Dorsolateral prefrontal cortex (tissue), 120 donors: ENCODE measurements at regions of chr2 and their contacts with region 1.

Region 1: GRCh38 chr2:203909261-203909967 is 27.1 kb upstream of the ICOS start:
- DNase-seq: peak in 1 of 10 donors; percentile 39
- H3K4me3 ChIP-seq: peak overlapping the region in 57 of 59 donors; percentile 2 to 61 (median 41)
- H3K27ac ChIP-seq: peak overlapping the region in 30 of 59 donors; percentile 2 to 75 (median 37)
- H3K27me3 ChIP-seq: peaks cover 0 to 5% (median 0%) of the 10 kb centered on the region in 45 donors
- CTCF ChIP-seq: peak; percentile 58 to 94 (median 83)

Region 2: DNA sequence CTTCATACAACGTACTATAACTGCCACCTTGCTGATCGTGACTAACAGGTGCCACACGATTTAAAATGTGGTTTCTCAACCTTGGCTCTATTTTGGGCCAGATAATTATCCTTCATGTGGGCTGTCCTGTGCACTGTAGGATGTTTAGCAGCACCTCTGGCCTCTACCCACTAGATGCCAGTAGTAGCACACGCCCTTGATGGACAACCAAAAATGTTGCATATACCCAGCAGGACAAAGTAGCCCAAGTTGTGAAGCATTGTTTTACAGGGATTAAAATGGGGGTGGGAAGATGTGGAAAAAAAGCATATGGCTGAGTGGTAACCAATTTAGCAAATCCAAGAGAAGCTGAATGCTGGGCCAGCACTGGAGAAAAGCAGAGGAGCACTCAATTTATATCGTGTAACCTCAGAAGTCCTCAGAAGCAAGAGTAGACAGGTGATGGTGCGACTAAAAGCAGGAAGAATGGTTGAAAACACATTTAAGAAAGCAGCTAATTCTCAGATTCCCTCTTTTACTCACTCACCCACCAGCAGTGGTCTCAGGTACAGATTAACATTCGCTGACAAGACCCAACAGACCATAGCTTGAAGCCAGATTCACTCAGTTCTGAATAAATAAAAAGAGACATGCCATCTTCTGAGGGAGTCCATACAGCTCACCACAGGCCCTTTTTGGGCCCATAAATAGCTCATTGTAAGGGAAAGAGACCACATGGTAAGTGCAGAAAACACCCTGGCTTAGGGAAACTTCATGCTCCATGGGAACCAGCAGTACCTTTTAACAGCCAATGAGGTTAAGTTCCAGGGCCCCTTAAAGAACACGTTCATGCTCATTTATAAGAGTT is 424.9 kb before region 1 on chr2:
- intact Hi-C with region 1: loop called (anchors 5 to 10 kb)
- DNase-seq: peak in 1 of 10 donors; percentile 24
- H3K4me3 ChIP-seq: no peak overlapping the region
- H3K27ac ChIP-seq: no peak overlapping the region
- H3K27me3 ChIP-seq: no peaks in the 10 kb centered on the region
- CTCF ChIP-seq: peak in 54 of 56 donors; percentile 28 to 78 (median 62)

Region 3: DNA sequence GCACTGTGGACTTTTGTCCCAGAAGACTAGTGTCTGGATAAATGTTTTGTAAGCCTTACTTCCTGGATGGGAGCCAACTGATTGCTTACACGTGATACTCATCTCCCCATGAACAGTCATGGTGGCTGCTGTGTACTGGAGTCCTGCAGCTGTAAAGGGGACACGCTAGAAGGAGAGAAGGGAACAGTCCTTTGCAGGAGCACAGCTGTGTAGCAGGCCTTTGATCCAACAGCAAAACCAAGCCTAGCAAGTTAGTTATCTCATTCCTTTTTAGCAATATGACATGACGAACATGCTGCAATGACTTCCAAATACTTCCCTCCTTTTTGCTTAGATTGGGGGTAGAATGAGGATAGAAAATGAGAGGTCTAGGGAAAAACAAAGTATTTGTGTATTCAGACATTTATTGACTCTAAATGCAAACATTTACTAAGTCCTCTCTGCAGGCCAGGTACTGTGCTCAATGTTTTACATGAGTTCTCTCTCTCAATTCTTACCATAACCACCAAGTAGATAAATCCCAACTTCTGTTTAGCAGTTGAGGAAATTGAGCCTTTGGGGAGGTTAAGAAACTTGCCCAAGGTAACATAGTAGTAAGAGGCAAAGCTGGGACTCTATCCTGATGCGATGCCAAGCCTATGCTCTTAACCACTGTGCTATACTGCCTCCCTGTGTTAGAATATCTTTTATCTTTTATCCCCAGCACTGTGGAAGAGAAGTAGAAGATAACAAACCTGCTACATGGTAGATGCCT is 258.4 kb before region 1 on chr2:
- intact Hi-C with region 1: loop called (anchors 5 kb)
- DNase-seq: peak in 1 of 10 donors; percentile 37
- H3K4me3 ChIP-seq: peak overlapping the region in 1 of 59 donors; percentile 20
- H3K27ac ChIP-seq: peak overlapping the region in 43 of 59 donors; percentile 0 to 75 (median 57)
- H3K27me3 ChIP-seq: no peaks in the 10 kb centered on the region
- CTCF ChIP-seq: peak in 55 of 56 donors; percentile 10 to 78 (median 55)

Region 4: DNA sequence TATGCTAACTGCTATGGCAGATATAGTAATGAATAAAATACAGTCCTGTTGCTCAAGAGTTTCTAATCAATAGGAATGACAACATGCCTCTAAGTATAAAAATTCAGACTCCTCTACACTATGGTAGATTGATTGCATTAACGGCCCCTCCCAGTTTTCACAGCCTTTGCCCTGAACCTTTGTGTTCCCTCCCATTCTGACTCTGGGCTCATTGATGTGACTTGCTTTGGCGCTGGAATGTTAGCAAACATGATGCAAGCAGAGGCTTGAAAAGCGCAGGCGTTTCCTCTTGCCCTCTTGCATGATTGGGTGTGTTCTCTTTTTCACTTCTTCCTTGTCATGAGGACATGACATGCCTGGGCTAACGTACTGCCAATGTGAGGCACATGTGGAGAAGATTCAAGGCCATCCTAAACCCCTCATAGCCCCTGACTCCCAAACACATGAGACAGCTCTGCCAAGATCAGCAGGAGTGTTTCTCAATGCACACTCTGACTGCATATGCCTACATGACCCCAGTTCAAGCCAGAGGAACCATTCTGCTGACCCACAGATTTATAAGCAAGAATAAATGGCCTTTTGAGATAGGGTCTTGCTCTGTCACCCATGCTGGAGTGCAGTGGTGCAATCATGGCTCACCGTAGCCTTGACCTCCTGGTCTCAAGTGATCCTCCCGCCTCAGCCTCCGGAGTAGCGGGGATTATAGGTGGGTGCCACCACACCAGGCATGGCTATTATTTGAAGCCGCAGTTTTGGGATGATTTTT is 252.7 kb before region 1 on chr2:
- intact Hi-C with region 1: loop called (anchors 5 kb)
- DNase-seq: no peak
- H3K4me3 ChIP-seq: no peak overlapping the region
- H3K27ac ChIP-seq: peak overlapping the region in 5 of 59 donors; percentile 33 to 53 (median 39)
- H3K27me3 ChIP-seq: no peaks in the 10 kb centered on the region
- CTCF ChIP-seq: no peak

Region 5: GRCh38 chr2:203814661-203815540 is 94.5 kb before region 1 on chr2:
- intact Hi-C with region 1: loop called (anchors 5 kb)
- DNase-seq: peak; percentile 24 to 72 (median 52)
- H3K4me3 ChIP-seq: peak overlapping the region in 37 of 59 donors; percentile 0 to 52 (median 30)
- H3K27ac ChIP-seq: peak overlapping the region in 5 of 59 donors; percentile 21 to 41 (median 34)
- H3K27me3 ChIP-seq: peaks cover 0 to 26% (median 0%) of the 10 kb centered on the region in 45 donors
- CTCF ChIP-seq: peak; percentile 41 to 87 (median 71)

Region 6: GRCh38 chr2:203894262-203894661 is 15.2 kb before region 1 on chr2:
- intact Hi-C with region 1: loop called in 1 of 2 experiments (anchors 2 kb)
- DNase-seq: no peak
- H3K4me3 ChIP-seq: no peak overlapping the region
- H3K27ac ChIP-seq: peak overlapping the region in 1 of 59 donors; percentile 3
- H3K27me3 ChIP-seq: peaks cover 0 to 17% (median 0%) of the 10 kb centered on the region in 45 donors
- CTCF ChIP-seq: no peak